CD4-positive, alpha-beta T cell (primary cell): ENCODE measurements at regions of chr11 and their contacts with region 1.

Region 1: GRCh38 chr11:87290304-87290922 is 252.7 kb downstream of the TMEM135 start:
- DNase-seq: peak in 3 of 14 experiments; percentile 63 to 68 (median 64)
- ATAC-seq: no peak
- H3K4me3 ChIP-seq: no peak overlapping the region
- H3K4me3 Mint-ChIP-seq: no peak overlapping the region
- H3K27ac ChIP-seq: no peak overlapping the region
- H3K27ac Mint-ChIP-seq: no peak overlapping the region
- H3K4me1 ChIP-seq: no peaks in the 10 kb centered on the region
- H3K4me1 Mint-ChIP-seq: no peaks in the 10 kb centered on the region
- H3K27me3 ChIP-seq: no peaks in the 10 kb centered on the region
- H3K27me3 Mint-ChIP-seq: no peaks in the 10 kb centered on the region
- CTCF ChIP-seq: peak; percentile 75

Region 2: DNA sequence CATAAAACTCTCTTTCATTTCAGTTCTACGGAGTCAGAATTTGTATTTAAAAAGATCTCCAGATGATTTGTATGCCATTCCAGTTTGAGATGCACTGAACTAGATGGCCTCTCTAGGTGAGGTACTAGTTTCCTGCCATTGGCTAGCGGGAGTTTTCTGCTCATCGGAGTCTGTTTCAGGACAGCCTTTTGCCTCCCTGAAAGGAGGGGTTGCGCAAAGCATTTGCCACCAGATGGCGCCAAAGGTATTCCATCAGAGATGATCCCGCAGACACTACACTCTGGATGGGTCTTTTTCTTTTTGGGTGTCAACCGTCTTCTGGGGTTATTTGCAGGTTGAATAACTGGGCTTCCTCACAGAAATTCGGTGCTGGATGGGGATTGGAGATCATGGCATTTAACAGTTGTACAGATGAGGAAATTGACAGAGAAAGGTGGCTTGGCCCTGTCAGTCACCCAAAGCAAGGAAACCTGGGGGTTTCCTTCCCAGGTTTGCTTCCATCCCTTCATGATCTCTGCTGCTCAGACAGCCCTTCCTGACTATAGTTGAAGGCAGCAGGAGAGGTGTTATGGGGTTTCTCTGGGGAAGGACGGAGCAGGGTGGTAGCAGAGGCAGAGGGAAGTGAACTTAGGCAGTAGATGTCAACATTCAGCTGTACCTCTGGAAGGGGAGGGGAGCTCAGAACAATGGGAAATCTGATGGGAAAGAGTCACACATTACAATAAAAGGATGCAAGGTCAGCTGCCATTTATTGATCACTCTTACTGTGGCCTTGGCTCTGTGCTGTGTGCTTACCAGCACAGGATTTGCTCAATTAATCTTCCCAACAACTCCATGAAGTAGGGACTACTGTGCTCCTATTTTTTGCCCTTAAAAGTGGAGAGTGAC is 834.1 kb before region 1 on chr11:
- CTCF ChIA-PET with region 1: no interaction called
- POLR2A ChIA-PET with region 1: no interaction called
- intact Hi-C with region 1: loop called in 1 of 2 experiments (anchors 5 kb)
- DNase-seq: peak; percentile 50 to 79 (median 65)
- ATAC-seq: peak; percentile 43
- H3K4me3 ChIP-seq: no peak overlapping the region
- H3K4me3 Mint-ChIP-seq: no peak overlapping the region
- H3K27ac ChIP-seq: no peak overlapping the region
- H3K27ac Mint-ChIP-seq: no peak overlapping the region
- H3K4me1 ChIP-seq: no peaks in the 10 kb centered on the region
- H3K4me1 Mint-ChIP-seq: no peaks in the 10 kb centered on the region
- H3K27me3 ChIP-seq: no peaks in the 10 kb centered on the region
- H3K27me3 Mint-ChIP-seq: no peaks in the 10 kb centered on the region
- CTCF ChIP-seq: peak; percentile 91

Region 3: DNA sequence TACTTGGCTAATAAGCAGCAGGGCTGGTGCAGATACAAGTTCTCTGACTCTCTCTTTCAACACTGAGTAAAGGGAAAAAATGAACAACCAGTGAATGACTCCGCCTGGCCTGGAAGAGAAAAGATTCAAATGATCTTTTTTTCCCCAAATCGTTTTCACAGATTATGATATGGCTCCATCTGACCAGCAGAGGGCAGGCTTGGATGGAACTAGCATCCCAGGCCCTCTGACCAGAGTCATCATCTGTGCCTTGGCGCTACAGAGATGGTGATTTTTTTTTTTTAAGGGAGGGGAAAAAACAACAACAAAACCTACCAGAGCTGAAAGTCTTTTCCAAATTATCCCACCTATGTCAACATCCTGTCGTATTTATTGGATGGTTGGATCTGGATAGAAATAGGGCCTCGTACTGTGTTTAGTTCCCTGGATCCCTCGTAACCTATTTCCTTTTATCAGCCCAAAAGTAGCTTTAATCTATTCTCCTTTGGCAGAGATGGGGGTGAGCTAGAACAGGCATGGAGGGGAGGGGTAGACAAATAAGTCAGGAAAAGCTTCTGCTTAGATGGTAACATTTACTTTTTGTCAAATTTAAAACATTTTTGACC is 420.3 kb before region 1 on chr11:
- CTCF ChIA-PET with region 1: no interaction called
- POLR2A ChIA-PET with region 1: no interaction called
- intact Hi-C with region 1: loop called in 1 of 2 experiments (anchors 5 kb)
- DNase-seq: peak; percentile 1 to 50 (median 10)
- ATAC-seq: peak; percentile 44
- H3K4me3 ChIP-seq: no peak overlapping the region
- H3K4me3 Mint-ChIP-seq: no peak overlapping the region
- H3K27ac ChIP-seq: no peak overlapping the region
- H3K27ac Mint-ChIP-seq: no peak overlapping the region
- H3K4me1 ChIP-seq: no peaks in the 10 kb centered on the region
- H3K4me1 Mint-ChIP-seq: no peaks in the 10 kb centered on the region
- H3K27me3 ChIP-seq: no peaks in the 10 kb centered on the region
- H3K27me3 Mint-ChIP-seq: no peaks in the 10 kb centered on the region
- CTCF ChIP-seq: peak; percentile 69

Region 4: GRCh38 chr11:86938900-86939880 is 351.2 kb before region 1 on chr11:
- CTCF ChIA-PET with region 1: interaction called, 5 read pairs
- POLR2A ChIA-PET with region 1: no interaction called
- intact Hi-C with region 1: loop called (anchors 1 kb)
- DNase-seq: peak in 3 of 14 experiments; percentile 53 to 60 (median 53)
- ATAC-seq: peak; percentile 46
- H3K4me3 ChIP-seq: no peak overlapping the region
- H3K4me3 Mint-ChIP-seq: no peak overlapping the region
- H3K27ac ChIP-seq: no peak overlapping the region
- H3K27ac Mint-ChIP-seq: no peak overlapping the region
- H3K4me1 ChIP-seq: no peaks in the 10 kb centered on the region
- H3K4me1 Mint-ChIP-seq: no peaks in the 10 kb centered on the region
- H3K27me3 ChIP-seq: no peaks in the 10 kb centered on the region
- H3K27me3 Mint-ChIP-seq: peaks cover 4% of the 10 kb centered on the region
- CTCF ChIP-seq: peak; percentile 71

Region 5: DNA sequence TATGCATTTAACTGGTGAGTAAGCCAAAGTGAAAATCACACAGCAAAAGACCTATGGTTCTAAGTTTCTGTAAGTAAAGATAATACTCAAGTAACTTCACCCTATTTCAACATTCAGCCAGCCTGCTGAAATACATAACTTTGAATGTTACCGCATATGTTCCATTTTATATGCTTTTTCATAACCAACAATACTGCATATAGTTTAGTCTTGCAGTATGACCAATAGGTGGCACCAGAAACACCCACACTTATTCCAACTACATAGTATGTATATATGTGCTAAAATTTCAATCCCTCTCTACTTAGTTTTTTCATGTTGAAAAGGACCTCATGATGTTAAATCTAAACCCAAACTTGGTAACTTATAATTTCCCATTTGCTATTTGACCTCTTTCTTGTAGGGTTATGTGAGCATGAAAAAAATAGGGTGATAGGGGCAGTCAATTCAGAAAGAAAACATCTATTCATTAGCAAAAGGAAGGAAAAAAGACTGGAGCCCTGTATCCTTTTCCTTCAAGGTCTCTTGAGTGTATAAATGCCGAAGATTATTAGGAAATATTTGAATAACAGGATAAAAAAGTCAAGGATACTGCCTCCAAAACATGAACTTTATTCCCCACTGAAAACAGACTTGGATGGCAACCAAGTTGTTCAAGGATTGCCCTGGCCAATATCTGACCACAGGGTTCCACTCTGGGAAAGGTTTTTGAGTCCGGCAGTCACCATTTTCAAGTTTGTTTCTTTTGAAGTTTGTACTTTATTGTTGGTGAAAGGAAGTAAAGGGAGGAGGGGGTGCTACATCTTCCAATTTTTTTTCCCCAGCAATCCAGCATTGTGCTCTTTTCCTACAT is 311.4 kb before region 1 on chr11:
- CTCF ChIA-PET with region 1: no interaction called
- POLR2A ChIA-PET with region 1: no interaction called
- intact Hi-C with region 1: loop called (anchors 1 to 2 kb)
- DNase-seq: peak in 4 of 14 experiments; percentile 6 to 57 (median 48)
- ATAC-seq: peak; percentile 55
- H3K4me3 ChIP-seq: no peak overlapping the region
- H3K4me3 Mint-ChIP-seq: no peak overlapping the region
- H3K27ac ChIP-seq: no peak overlapping the region
- H3K27ac Mint-ChIP-seq: no peak overlapping the region
- H3K4me1 ChIP-seq: no peaks in the 10 kb centered on the region
- H3K4me1 Mint-ChIP-seq: no peaks in the 10 kb centered on the region
- H3K27me3 ChIP-seq: peaks cover 0 to 3% of the 10 kb centered on the region in 2 experiments
- H3K27me3 Mint-ChIP-seq: peaks cover under 1% of the 10 kb centered on the region
- CTCF ChIP-seq: peak; percentile 82

Region 6: DNA sequence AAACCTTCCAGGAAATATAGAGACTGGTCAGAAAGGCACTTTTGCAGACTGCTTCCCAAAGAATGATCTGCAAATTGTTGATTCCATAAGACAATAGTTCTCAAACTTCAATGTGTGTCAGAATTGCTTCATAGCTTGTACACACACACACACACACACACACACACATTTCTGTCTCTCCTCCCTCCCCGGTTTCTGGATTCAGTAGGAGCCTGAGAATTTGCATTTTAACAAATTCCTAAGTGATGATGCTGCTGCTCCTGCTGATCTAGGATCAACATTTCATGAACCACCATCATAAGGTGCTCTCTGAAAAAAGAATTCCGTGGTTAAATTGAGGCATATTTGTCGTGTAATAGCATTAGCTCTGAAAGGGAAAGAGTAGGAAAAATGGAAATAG is 299.9 kb before region 1 on chr11:
- CTCF ChIA-PET with region 1: no interaction called
- POLR2A ChIA-PET with region 1: no interaction called
- intact Hi-C with region 1: loop called in 1 of 2 experiments (anchors 1 kb)
- DNase-seq: no peak
- ATAC-seq: no peak
- H3K4me3 ChIP-seq: no peak overlapping the region
- H3K4me3 Mint-ChIP-seq: no peak overlapping the region
- H3K27ac ChIP-seq: no peak overlapping the region
- H3K27ac Mint-ChIP-seq: no peak overlapping the region
- H3K4me1 ChIP-seq: no peaks in the 10 kb centered on the region
- H3K4me1 Mint-ChIP-seq: no peaks in the 10 kb centered on the region
- H3K27me3 ChIP-seq: peaks cover 0 to 3% of the 10 kb centered on the region in 2 experiments
- H3K27me3 Mint-ChIP-seq: peaks cover 4% of the 10 kb centered on the region
- CTCF ChIP-seq: no peak

Region 7: GRCh38 chr11:87421422-87421821 is 131.0 kb after region 1 on chr11:
- CTCF ChIA-PET with region 1: no interaction called
- POLR2A ChIA-PET with region 1: no interaction called
- intact Hi-C with region 1: no loop called
- DNase-seq: peak in 6 of 14 experiments; percentile 1 to 73 (median 42)
- ATAC-seq: no peak
- H3K4me3 ChIP-seq: no peak overlapping the region
- H3K4me3 Mint-ChIP-seq: no peak overlapping the region
- H3K27ac ChIP-seq: no peak overlapping the region
- H3K27ac Mint-ChIP-seq: no peak overlapping the region
- H3K4me1 ChIP-seq: no peaks in the 10 kb centered on the region
- H3K4me1 Mint-ChIP-seq: no peaks in the 10 kb centered on the region
- H3K27me3 ChIP-seq: no peaks in the 10 kb centered on the region
- H3K27me3 Mint-ChIP-seq: no peaks in the 10 kb centered on the region
- CTCF ChIP-seq: peak; percentile 81